Psoas muscle (tissue), 8 donors: ENCODE measurements at regions of chr12 and their contacts with region 1.

Region 1: GRCh38 chr12:41514907-41515306 is 326.8 kb downstream of the PDZRN4 start:
- DNase-seq: no peak
- ATAC-seq: no peak
- H3K4me3 ChIP-seq: no peak overlapping the region
- H3K27ac ChIP-seq: no peak overlapping the region
- H3K4me1 ChIP-seq: no peaks in the 10 kb centered on the region
- H3K27me3 ChIP-seq: no peaks in the 10 kb centered on the region
- CTCF ChIP-seq: no peak

Region 2: GRCh38 chr12:41473441-41473840 is 41.5 kb before region 1 on chr12:
- intact Hi-C with region 1: no loop called
- DNase-seq: no peak
- ATAC-seq: no peak
- H3K4me3 ChIP-seq: no peak overlapping the region
- H3K27ac ChIP-seq: no peak overlapping the region
- H3K4me1 ChIP-seq: no peaks in the 10 kb centered on the region
- H3K27me3 ChIP-seq: no peaks in the 10 kb centered on the region
- CTCF ChIP-seq: no peak

Region 3: GRCh38 chr12:41486718-41487117 is 28.2 kb before region 1 on chr12:
- intact Hi-C with region 1: no loop called
- DNase-seq: no peak
- ATAC-seq: no peak
- H3K4me3 ChIP-seq: no peak overlapping the region
- H3K27ac ChIP-seq: no peak overlapping the region
- H3K4me1 ChIP-seq: no peaks in the 10 kb centered on the region
- H3K27me3 ChIP-seq: no peaks in the 10 kb centered on the region
- CTCF ChIP-seq: no peak

Region 4: DNA sequence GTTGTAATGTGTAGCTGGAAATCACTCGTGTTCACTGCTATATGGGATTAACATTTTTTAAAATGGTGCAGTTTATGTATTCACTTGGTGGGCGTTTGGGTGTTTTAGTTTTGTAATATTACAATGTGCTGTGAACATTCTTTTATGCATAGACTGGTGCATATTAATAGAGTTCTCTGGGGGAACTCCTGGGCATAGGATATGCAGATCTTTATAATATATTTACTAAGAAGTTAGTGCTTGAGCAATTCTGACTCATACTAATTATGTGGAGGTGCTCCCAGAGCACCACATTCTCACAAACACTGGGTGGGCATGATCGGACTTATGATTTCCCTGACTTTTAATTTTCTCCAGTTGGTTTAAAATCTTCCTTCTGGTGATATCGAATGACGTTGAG is 15.5 kb after region 1 on chr12:
- intact Hi-C with region 1: loop called in 1 of 2 experiments (anchors 1 kb)
- DNase-seq: no peak
- ATAC-seq: no peak
- H3K4me3 ChIP-seq: no peak overlapping the region
- H3K27ac ChIP-seq: no peak overlapping the region
- H3K4me1 ChIP-seq: no peaks in the 10 kb centered on the region
- H3K27me3 ChIP-seq: no peaks in the 10 kb centered on the region
- CTCF ChIP-seq: no peak